Stomach (tissue), 19 donors: ENCODE measurements at regions of chr7 and their contacts with region 1.

Region 1: GRCh38 chr7:106009403-106010226 is 46.6 kb downstream of the CDHR3 start:
- DNase-seq: peak; percentile 90 to 96
- H3K4me3 ChIP-seq: peak overlapping the region in 1 of 4 donors; percentile 3
- H3K27ac ChIP-seq: peak overlapping the region; percentile 14 to 74 (median 37)
- H3K4me1 ChIP-seq: peaks cover 10 to 41% (median 24%) of the 10 kb centered on the region in 4 donors
- H3K27me3 ChIP-seq: no peaks in the 10 kb centered on the region
- CTCF ChIP-seq: peak in 6 of 7 experiments; percentile 84 to 99 (median 95)
- EP300 ChIP-seq: no peak
- POLR2A ChIP-seq: no peak

Region 2: GRCh38 chr7:105759670-105760550 is 249.7 kb before region 1 on chr7:
- intact Hi-C with region 1: loop called (anchors 10 kb)
- DNase-seq: peak; percentile 49 to 73
- H3K4me3 ChIP-seq: no peak overlapping the region
- H3K27ac ChIP-seq: peak overlapping the region in 1 of 5 donors; percentile 26
- H3K4me1 ChIP-seq: peaks cover 0 to 18% (median 10%) of the 10 kb centered on the region in 4 donors
- H3K27me3 ChIP-seq: no peaks in the 10 kb centered on the region
- CTCF ChIP-seq: peak in 5 of 7 experiments; percentile 13 to 62 (median 51)
- EP300 ChIP-seq: no peak
- POLR2A ChIP-seq: no peak

Region 3: GRCh38 chr7:105934572-105935185 is 74.9 kb before region 1 on chr7:
- intact Hi-C with region 1: loop called (anchors 10 kb)
- DNase-seq: peak; percentile 56 to 89
- H3K4me3 ChIP-seq: no peak overlapping the region
- H3K27ac ChIP-seq: peak overlapping the region; percentile 61 to 70 (median 63)
- H3K4me1 ChIP-seq: peaks cover 7 to 31% (median 24%) of the 10 kb centered on the region in 4 donors
- H3K27me3 ChIP-seq: no peaks in the 10 kb centered on the region
- CTCF ChIP-seq: peak in 5 of 7 experiments; percentile 41 to 82 (median 48)
- EP300 ChIP-seq: no peak
- POLR2A ChIP-seq: no peak

Region 4: DNA sequence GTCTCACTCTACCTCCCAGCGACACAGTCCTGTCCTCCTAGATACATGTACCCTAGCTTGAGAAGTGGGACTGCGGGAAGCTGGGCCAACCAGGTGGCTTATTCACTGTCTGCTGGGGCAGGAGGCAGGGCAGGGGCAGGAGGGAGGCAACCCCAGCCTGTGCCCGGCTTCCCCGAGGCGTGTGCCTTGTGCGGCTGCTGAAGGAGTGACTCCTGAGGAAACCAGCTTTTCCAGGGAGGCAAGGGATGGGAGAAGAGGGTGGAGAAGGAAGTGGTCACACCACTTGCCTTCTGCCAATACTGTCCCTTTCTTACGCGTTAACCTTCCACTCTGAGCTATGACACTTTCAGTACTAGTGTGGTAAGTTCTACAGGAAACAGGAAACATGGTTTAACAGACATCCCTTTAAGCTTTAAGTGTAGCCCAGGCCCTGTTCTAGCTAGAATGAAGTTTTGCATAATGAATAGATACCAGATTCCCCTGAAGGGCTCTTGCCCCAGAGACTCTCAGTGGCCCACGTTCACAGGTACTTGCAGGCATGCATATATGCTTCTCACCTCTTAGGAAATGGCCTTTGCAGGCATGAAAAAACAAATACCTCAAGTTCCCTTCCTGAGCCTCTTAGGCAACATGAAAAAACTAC is 61.9 kb after region 1 on chr7:
- intact Hi-C with region 1: no loop called
- DNase-seq: peak; percentile 71 to 87
- H3K4me3 ChIP-seq: no peak overlapping the region
- H3K27ac ChIP-seq: peak overlapping the region; percentile 76 to 88 (median 84)
- H3K4me1 ChIP-seq: peaks cover 33 to 58% (median 46%) of the 10 kb centered on the region in 4 donors
- H3K27me3 ChIP-seq: no peaks in the 10 kb centered on the region
- CTCF ChIP-seq: no peak
- EP300 ChIP-seq: no peak
- POLR2A ChIP-seq: no peak